ENCODE measurements at regions of chr15 and their contacts with region 1.

Region 1: GRCh38 chr15:89690276-89691218 is at the starts of genes PEX11A and WDR93:
- DNase-seq: peak; percentile 76 to 85
- H3K4me3 ChIP-seq: peak within 1 kb of the TSS; percentile 87
- H3K4me3 Mint-ChIP-seq: peak within 1 kb of the TSS; percentile 87
- H3K27ac Mint-ChIP-seq: peak within 1 kb of the TSS; percentile 6
- H3K4me1 ChIP-seq: no peaks in the 10 kb centered on the region
- H3K4me1 Mint-ChIP-seq: no peaks in the 10 kb centered on the region
- H3K27me3 ChIP-seq: no peaks in the 10 kb centered on the region
- H3K27me3 Mint-ChIP-seq: no peaks in the 10 kb centered on the region
- CTCF ChIP-seq: no peak
- total RNA-seq, gene PEX11A: 3.7 and 4.1 TPM in 2 replicates
- total RNA-seq, gene WDR93: 0.16 TPM in 1 of 2 replicates, not detected in the other

Region 2: GRCh38 chr15:89654847-89655805 is 35.4 kb before region 1 on chr15 and contains the start of gene KIF7:
- CTCF ChIA-PET with region 1: no interaction called
- POLR2A ChIA-PET with region 1: no interaction called
- intact Hi-C with region 1: loop called (anchors 5 kb)
- DNase-seq: peak in 1 of 2 experiments; percentile 67
- H3K4me3 ChIP-seq: peak within 1 kb of the TSS; percentile 79
- H3K4me3 Mint-ChIP-seq: peak within 1 kb of the TSS; percentile 90
- H3K27ac Mint-ChIP-seq: peak within 1 kb of the TSS; percentile 45
- H3K4me1 ChIP-seq: peaks cover 4% of the 10 kb centered on the region
- H3K4me1 Mint-ChIP-seq: peaks cover 7% of the 10 kb centered on the region
- H3K27me3 ChIP-seq: no peaks in the 10 kb centered on the region
- H3K27me3 Mint-ChIP-seq: peaks cover 3% of the 10 kb centered on the region
- CTCF ChIP-seq: no peak
- total RNA-seq, gene KIF7: 8.2 TPM in 2 replicates

Region 3: DNA sequence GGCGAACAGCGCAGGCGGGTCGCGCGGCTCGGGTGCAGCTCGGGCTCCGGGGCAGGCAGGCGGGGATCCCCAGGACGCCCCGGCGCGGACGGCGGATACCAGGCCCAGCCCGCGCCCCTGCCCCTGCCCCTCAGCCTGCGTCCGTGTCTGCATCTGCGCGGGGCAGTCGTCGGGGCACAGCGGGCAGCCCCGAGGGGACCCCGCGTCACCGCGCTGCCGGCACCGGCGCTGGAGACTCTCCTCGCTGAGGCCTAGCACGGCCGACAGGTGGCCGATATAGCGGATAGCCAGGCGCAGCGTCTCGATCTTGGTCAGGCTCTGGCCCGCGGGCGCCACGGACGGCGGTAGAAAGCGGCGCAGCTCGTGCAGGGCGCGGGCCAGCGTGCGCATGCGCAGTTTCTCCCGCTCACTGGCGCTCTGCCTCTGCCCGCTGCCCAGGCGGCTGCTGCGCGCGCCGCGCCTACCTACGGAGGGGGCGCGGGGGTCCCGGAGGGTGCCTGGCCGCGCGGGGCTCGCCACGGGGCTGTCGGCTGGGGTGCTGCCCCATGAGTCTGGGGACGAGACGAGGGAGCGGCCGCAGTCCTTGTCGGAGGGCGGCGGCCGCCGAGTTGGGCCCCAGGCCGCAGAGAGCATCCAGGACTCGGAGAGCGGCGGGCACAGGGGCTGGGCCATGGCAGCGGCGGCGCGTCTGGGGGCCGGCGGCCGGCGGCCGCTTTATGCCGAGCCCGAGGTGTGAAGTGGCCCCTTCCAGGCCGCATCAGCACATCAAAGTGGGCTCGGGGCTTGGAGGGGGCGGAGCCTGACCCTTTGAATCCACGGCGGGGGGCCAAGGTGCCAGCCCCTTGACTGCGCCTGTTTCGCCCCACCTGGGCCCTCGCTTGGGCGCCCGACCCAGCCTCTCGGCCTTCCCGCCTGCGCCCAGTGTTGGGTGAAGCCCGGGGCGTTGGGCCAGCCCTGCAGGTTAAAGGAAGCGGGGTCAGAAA is 60.3 kb after region 1 on chr15 and contains the start of gene MESP1:
- CTCF ChIA-PET with region 1: no interaction called
- POLR2A ChIA-PET with region 1: no interaction called
- intact Hi-C with region 1: no loop called
- DNase-seq: peak; percentile 92 to 95
- H3K4me3 ChIP-seq: peak within 1 kb of the TSS; percentile 59
- H3K4me3 Mint-ChIP-seq: peak within 1 kb of the TSS; percentile 62
- H3K27ac Mint-ChIP-seq: no peak within 1 kb of the TSS
- H3K4me1 ChIP-seq: peaks cover 13% of the 10 kb centered on the region
- H3K4me1 Mint-ChIP-seq: peaks cover 9% of the 10 kb centered on the region
- H3K27me3 ChIP-seq: no peaks in the 10 kb centered on the region
- H3K27me3 Mint-ChIP-seq: no peaks in the 10 kb centered on the region
- CTCF ChIP-seq: peak; percentile 83 to 85
- total RNA-seq, gene MESP1: 1.00 and 2.2 TPM in 2 replicates